ENCODE measurements at regions of chr4 and their contacts with region 1.

Region 1: DNA sequence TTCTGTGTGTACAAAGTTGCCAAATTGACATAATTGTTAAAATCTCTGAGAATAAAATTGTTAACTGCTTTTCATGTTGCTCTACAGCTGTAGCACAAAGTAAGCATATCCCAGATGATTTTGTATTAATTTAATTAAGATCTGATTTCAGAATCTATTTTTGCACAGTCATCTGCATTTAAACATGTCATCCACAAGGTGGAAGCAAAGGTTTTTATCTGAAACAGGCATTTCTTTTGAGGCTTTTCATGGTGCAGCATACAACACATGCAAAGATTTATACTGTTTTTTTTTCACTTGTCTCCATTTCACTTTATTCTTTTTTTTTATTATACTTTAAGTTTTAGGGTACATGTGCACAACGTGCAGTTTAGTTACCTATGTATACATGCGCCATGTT is 51.2 kb downstream of the GC start:
- DNase-seq: peak in 1 of 2 experiments; percentile 21
- H3K4me3 ChIP-seq: no peak overlapping the region
- H3K4me1 ChIP-seq: no peaks in the 10 kb centered on the region
- H3K27me3 ChIP-seq: no peaks in the 10 kb centered on the region

Region 2: GRCh38 chr4:72295966-72296557 is 563.4 kb after region 1 on chr4:
- in situ Hi-C with region 1: loop called (anchors 25 kb)
- DNase-seq: peak in 1 of 2 experiments; percentile 70
- H3K4me3 ChIP-seq: no peak overlapping the region
- H3K4me1 ChIP-seq: no peaks in the 10 kb centered on the region; the same call in 1 of the 2 replicates
- H3K27me3 ChIP-seq: no peaks in the 10 kb centered on the region

Measured in HAP-1 (cell line).